PC-3 (cell line): ENCODE measurements at regions of chr2 and their contacts with region 1.

Region 1: GRCh38 chr2:44397447-44398175 is 35.9 kb downstream of the CAMKMT start:
- DNase-seq: no peak
- ATAC-seq: no peak
- H3K4me3 ChIP-seq: no peak overlapping the region
- H3K27ac ChIP-seq: no peak overlapping the region
- H3K4me1 ChIP-seq: no peaks in the 10 kb centered on the region
- H3K27me3 ChIP-seq: no peaks in the 10 kb centered on the region
- CTCF ChIP-seq: no peak

Region 2: GRCh38 chr2:44433881-44434280 is 36.3 kb after region 1 on chr2:
- CTCF ChIA-PET with region 1: no interaction called
- POLR2A ChIA-PET with region 1: no interaction called
- intact Hi-C with region 1: loop called (anchors 5 kb)
- DNase-seq: peak; percentile 87
- ATAC-seq: peak; percentile 79
- H3K4me3 ChIP-seq: no peak overlapping the region
- H3K27ac ChIP-seq: no peak overlapping the region
- H3K4me1 ChIP-seq: peaks cover 18% of the 10 kb centered on the region
- H3K27me3 ChIP-seq: no peaks in the 10 kb centered on the region
- CTCF ChIP-seq: no peak